ENCODE measurements at regions of chr5 and their contacts with region 1.

Region 1: GRCh38 chr5:140690941-140691924 is at the starts of genes HARS1 and HARS2:
- DNase-seq: peak; percentile 87 to 90
- ATAC-seq: peak; percentile 97 to 98
- H3K4me3 ChIP-seq: peak within 1 kb of the TSS; percentile 88 to 96 (median 90)
- H3K27ac ChIP-seq: peak within 1 kb of the TSS; percentile 85 to 93 (median 90)
- H3K4me1 ChIP-seq: peaks cover 18 to 40% of the 10 kb centered on the region in 2 donors
- H3K27me3 ChIP-seq: no peaks in the 10 kb centered on the region
- CTCF ChIP-seq: no peak
- POLR2A ChIP-seq: peak; percentile 38 to 78
- total RNA-seq, gene HARS1: 38.2 to 72.9 (median 59.4) TPM
- total RNA-seq, gene HARS2: 25.2 to 36.0 (median 27.0) TPM

Region 2: DNA sequence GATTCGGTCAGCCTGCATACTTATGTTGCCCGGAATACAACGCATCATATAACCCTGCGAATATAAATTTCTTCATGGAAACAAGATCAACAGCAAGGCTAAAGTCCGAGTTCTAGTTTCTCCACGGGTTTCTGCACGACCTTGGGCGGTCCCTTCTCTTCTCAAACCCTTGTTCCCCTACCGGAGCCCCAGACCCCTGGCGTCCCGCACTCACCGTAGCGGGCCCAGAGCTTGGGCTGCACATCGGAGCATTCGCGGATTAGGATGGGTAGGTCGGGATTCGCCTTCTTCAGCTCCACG is 44.2 kb before region 1 on chr5:
- in situ Hi-C with region 1: no loop called
- intact Hi-C with region 1: loop called (anchors 5 kb)
- DNase-seq: no peak
- ATAC-seq: peak; percentile 6 to 27
- H3K4me3 ChIP-seq: peak overlapping the region; percentile 81 to 96 (median 90)
- H3K27ac ChIP-seq: peak overlapping the region; percentile 85 to 94 (median 92)
- H3K4me1 ChIP-seq: peaks cover 19 to 20% of the 10 kb centered on the region in 2 donors
- H3K27me3 ChIP-seq: no peaks in the 10 kb centered on the region
- CTCF ChIP-seq: no peak
- POLR2A ChIP-seq: no peak

Region 3: GRCh38 chr5:140734354-140734753 is 43.1 kb after region 1 on chr5:
- in situ Hi-C with region 1: no loop called
- intact Hi-C with region 1: loop called (anchors 1 kb)
- DNase-seq: no peak
- ATAC-seq: peak; percentile 74 to 82
- H3K4me3 ChIP-seq: no peak overlapping the region
- H3K27ac ChIP-seq: no peak overlapping the region
- H3K4me1 ChIP-seq: no peaks in the 10 kb centered on the region
- H3K27me3 ChIP-seq: peaks cover 0 to 7% (median 0%) of the 10 kb centered on the region in 3 donors
- CTCF ChIP-seq: peak; percentile 31 to 65 (median 41)
- POLR2A ChIP-seq: no peak